PC-9 (cell line): ENCODE measurements at regions of chr10 and their contacts with region 1.

Region 1: GRCh38 chr10:73997787-73998622 is at the start of gene VCL:
- DNase-seq: peak; percentile 93 to 100
- H3K4me3 ChIP-seq: peak within 1 kb of the TSS; percentile 90
- H3K27ac ChIP-seq: peak within 1 kb of the TSS; percentile 79
- H3K4me1 ChIP-seq: peaks cover 41% of the 10 kb centered on the region
- H3K27me3 ChIP-seq: no peaks in the 10 kb centered on the region
- CTCF ChIP-seq: no peak
- total RNA-seq, gene VCL: 208 and 225 TPM in 2 replicates

Region 2: GRCh38 chr10:73899423-73899822 is 98.6 kb before region 1 on chr10:
- CTCF ChIA-PET with region 1: interaction called, 12 read pairs
- POLR2A ChIA-PET with region 1: interaction called, 14 read pairs
- intact Hi-C with region 1: no loop called
- DNase-seq: peak; percentile 87 to 99
- H3K4me3 ChIP-seq: peak overlapping the region; percentile 4; the same call in 1 of the 2 replicates
- H3K27ac ChIP-seq: peak overlapping the region; percentile 98
- H3K4me1 ChIP-seq: peaks cover 83% of the 10 kb centered on the region
- H3K27me3 ChIP-seq: no peaks in the 10 kb centered on the region
- CTCF ChIP-seq: no peak

Region 3: GRCh38 chr10:73965890-73966768 is 31.9 kb before region 1 on chr10:
- CTCF ChIA-PET with region 1: no interaction called
- POLR2A ChIA-PET with region 1: interaction called, 57 read pairs
- intact Hi-C with region 1: loop called (anchors 1 kb)
- DNase-seq: peak; percentile 93 to 99
- H3K4me3 ChIP-seq: peak overlapping the region; percentile 43; the same call in 1 of the 2 replicates
- H3K27ac ChIP-seq: peak overlapping the region; percentile 99
- H3K4me1 ChIP-seq: peaks cover 38% of the 10 kb centered on the region
- H3K27me3 ChIP-seq: no peaks in the 10 kb centered on the region
- CTCF ChIP-seq: no peak

Region 4: GRCh38 chr10:74058658-74059057 is 60.7 kb after region 1 on chr10:
- CTCF ChIA-PET with region 1: no interaction called
- POLR2A ChIA-PET with region 1: interaction called, 7 read pairs
- intact Hi-C with region 1: loop called (anchors 2 kb)
- DNase-seq: no peak
- H3K4me3 ChIP-seq: no peak overlapping the region
- H3K27ac ChIP-seq: peak overlapping the region; percentile 92; the same call in 1 of the 2 replicates
- H3K4me1 ChIP-seq: peaks cover 50% of the 10 kb centered on the region
- H3K27me3 ChIP-seq: no peaks in the 10 kb centered on the region
- CTCF ChIP-seq: no peak; the same call in 1 of the 2 replicates